ENCODE measurements at regions of chr19 and their contacts with region 1.

Region 1: DNA sequence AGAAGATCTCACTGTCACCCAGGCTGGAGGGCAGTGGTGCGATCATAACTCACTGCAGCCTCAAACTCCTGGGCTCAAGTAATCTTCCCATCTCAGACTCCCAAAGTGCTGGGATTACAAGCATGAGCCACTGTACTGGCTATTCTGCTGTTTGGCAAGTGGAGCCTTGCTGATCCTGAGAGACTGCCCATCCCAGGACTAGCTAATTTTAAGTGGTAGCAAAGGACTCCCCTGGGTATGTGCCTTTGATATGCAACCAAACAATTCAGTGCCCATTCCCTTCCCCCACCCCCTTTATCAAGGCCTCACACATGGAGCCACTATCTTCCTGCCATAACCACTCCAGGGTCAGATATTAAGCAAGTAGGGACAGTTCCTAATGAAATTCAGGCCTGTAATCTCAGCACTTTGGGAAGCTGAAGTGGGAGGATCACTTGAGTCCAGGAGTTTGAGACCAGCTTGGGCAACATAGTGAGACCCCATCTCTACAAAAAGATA is 17.0 kb upstream of the ZNF460 start:
- DNase-seq: no peak
- H3K4me3 ChIP-seq: no peak overlapping the region
- CTCF ChIP-seq: no peak

Region 2: DNA sequence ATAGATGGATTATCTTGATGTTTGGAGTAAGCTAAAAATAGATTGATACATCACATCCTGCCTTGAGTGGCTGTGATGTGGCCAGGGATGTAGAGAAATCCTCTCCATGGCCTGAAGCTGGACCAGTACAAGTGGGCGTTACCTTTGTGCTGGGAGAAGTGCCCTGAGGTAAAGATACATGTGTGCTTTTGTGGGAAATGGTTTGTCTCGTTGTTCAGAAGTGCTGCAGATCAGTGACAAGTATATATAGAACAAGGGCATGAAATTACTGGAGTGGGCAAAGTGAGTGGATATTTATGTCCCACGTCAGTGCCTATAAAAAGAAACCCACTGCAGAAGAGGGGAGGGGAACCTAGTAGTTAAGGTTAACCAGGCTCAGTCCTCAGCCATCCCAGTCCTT is 75.6 kb after region 1 on chr19:
- in situ Hi-C with region 1: no loop called
- DNase-seq: no peak
- H3K4me3 ChIP-seq: no peak overlapping the region
- CTCF ChIP-seq: no peak

Region 3: GRCh38 chr19:57389730-57390598 is 126.7 kb after region 1 on chr19 and contains the start of gene ZNF548:
- in situ Hi-C with region 1: loop called (anchors 10 kb)
- DNase-seq: peak; percentile 98
- H3K4me3 ChIP-seq: peak within 1 kb of the TSS; percentile 89
- CTCF ChIP-seq: no peak

Measured in astrocyte of the cerebellum (primary cell).